ENCODE measurements at regions of chr16 and their contacts with region 1.

Region 1: GRCh38 chr16:89315791-89316581 is 98.5 kb downstream of the ZNF778 start:
- DNase-seq: peak; percentile 93
- ATAC-seq: peak; percentile 84
- H3K4me3 Mint-ChIP-seq: peak overlapping the region; percentile 65
- H3K27ac Mint-ChIP-seq: peak overlapping the region; percentile 99
- H3K4me1 Mint-ChIP-seq: peaks cover 95% of the 10 kb centered on the region
- H3K27me3 Mint-ChIP-seq: no peaks in the 10 kb centered on the region

Region 2: GRCh38 chr16:88610080-88610479 is 705.9 kb before region 1 on chr16:
- CTCF ChIA-PET with region 1: no interaction called
- DNase-seq: no peak
- ATAC-seq: no peak
- H3K4me3 Mint-ChIP-seq: no peak overlapping the region
- H3K27ac Mint-ChIP-seq: no peak overlapping the region
- H3K4me1 Mint-ChIP-seq: no peaks in the 10 kb centered on the region
- H3K27me3 Mint-ChIP-seq: no peaks in the 10 kb centered on the region

Region 3: DNA sequence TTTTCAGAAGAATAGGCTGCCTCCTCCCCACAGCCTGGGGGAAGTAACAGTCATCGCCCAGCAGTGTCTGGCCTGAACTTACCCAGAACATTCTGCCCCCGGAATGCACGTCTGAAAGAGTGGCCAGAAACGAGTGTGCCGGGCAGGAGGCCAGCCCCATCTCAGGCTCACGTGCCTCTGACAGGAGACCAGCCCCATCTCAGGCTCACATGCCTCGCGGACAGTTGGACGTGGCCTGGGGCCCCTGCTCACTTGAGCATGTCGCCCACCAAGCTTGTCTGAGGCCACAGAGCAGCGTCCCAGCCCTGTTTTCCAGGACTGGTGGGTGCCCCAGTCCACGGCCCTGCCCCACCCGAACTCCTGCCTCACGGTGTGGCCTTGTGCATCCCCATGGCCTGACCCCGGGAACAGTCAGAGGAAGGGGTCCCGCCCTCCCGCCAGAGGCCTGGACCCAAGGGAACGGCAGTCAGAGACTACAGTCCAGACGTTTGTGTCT is 160.8 kb before region 1 on chr16:
- CTCF ChIA-PET with region 1: no interaction called
- DNase-seq: no peak
- ATAC-seq: no peak
- H3K4me3 Mint-ChIP-seq: no peak overlapping the region
- H3K27ac Mint-ChIP-seq: no peak overlapping the region
- H3K4me1 Mint-ChIP-seq: no peaks in the 10 kb centered on the region
- H3K27me3 Mint-ChIP-seq: no peaks in the 10 kb centered on the region

Region 4: GRCh38 chr16:89289428-89290395 is 26.3 kb before region 1 on chr16:
- CTCF ChIA-PET with region 1: interaction called, 11 read pairs
- DNase-seq: peak; percentile 81
- ATAC-seq: peak; percentile 91
- H3K4me3 Mint-ChIP-seq: no peak overlapping the region
- H3K27ac Mint-ChIP-seq: peak overlapping the region; percentile 18
- H3K4me1 Mint-ChIP-seq: peaks cover 6% of the 10 kb centered on the region
- H3K27me3 Mint-ChIP-seq: no peaks in the 10 kb centered on the region

Region 5: DNA sequence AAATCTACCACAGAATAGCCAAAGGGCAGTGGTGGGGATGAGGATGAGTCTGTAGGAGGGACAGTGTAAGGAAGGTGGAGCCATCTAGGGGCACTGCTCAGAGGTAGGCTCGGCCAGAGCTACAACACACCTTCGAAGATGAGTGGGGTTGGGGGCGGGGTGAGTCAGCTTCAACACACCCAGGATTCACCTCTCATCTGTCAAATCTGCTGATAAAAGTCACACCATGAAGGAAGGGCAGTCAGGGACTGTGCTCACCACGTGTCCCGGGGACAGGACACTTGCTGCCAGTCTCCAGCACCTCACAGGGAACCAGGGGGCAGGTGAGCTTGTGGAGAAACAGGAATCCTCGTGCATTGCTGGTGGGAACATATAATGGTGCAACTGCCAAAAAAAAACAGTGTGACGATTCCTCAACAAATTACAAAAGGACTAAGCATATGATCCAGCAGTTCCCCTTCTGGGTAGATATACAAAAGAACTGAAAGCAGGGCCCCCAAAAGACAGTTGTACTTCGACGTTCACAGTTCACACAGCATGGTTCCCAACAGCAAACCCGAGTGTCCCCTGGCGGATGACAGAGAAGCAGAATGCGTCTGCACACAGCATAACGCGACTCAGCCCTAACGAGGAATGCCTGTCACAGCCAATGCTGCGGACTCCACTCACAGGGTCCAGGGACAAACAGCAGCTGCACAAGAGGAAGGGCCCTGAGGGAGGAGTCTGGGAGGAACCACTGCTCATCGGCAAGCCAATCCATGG is 41.2 kb after region 1 on chr16:
- CTCF ChIA-PET with region 1: interaction called, 11 read pairs
- DNase-seq: peak; percentile 65
- ATAC-seq: no peak
- H3K4me3 Mint-ChIP-seq: peak overlapping the region; percentile 48
- H3K27ac Mint-ChIP-seq: peak overlapping the region; percentile 89
- H3K4me1 Mint-ChIP-seq: peaks cover 90% of the 10 kb centered on the region
- H3K27me3 Mint-ChIP-seq: no peaks in the 10 kb centered on the region

Region 6: GRCh38 chr16:89442990-89443731 is 127.2 kb after region 1 on chr16:
- CTCF ChIA-PET with region 1: no interaction called
- DNase-seq: no peak
- ATAC-seq: no peak
- H3K4me3 Mint-ChIP-seq: no peak overlapping the region
- H3K27ac Mint-ChIP-seq: peak overlapping the region; percentile 75
- H3K4me1 Mint-ChIP-seq: peaks cover 90% of the 10 kb centered on the region
- H3K27me3 Mint-ChIP-seq: no peaks in the 10 kb centered on the region

Region 7: DNA sequence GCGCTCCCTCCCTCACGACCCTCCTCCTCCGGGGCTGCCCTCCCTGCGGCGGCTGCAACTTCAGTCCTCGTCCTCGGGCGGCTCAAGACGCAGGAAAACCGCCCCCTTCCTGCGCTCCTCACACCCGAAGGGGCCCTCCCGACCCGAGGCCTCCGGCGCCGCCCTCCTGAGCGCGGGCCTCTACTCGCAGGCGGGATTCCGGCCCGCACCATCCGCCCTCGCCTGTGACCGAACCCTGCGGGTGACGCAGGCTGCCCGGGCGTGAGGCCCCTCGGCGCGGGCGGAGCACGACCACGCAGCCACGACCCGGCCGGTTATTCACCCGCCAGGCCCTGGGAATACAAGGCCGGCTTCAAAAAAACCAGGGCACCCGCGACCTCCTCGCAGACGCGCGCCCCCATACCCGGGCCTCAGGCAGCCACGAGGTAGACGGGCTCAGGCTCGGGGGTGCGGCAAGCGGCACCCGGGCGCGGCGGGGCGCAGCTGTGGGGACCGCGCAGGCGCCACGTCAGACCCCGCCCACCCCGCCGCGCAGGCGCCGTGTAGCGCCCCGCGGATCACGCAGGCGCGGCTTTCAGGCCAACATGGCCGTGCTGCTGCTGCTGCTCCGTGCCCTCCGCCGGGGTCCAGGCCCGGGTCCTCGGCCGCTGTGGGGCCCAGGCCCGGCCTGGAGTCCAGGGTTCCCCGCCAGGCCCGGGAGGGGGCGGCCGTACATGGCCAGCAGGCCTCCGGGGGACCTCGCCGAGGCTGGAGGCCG is 192.0 kb after region 1 on chr16 and contains the start of gene SPG7:
- CTCF ChIA-PET with region 1: interaction called, 17 read pairs
- DNase-seq: peak; percentile 92
- ATAC-seq: peak; percentile 79
- H3K4me3 Mint-ChIP-seq: peak within 1 kb of the TSS; percentile 93
- H3K27ac Mint-ChIP-seq: peak within 1 kb of the TSS; percentile 92
- H3K4me1 Mint-ChIP-seq: peaks cover 42% of the 10 kb centered on the region
- H3K27me3 Mint-ChIP-seq: no peaks in the 10 kb centered on the region
- total RNA-seq, gene SPG7: 92.1 to 110 TPM